Heart right ventricle (tissue), 16 donors: ENCODE measurements at regions of chr1 and their contacts with region 1.

Region 1: GRCh38 chr1:71049951-71050598 is 2.5 kb upstream of the PTGER3 start:
- DNase-seq: peak in 1 of 2 donors; percentile 40
- ATAC-seq: peak in 5 of 8 donors; percentile 40 to 66 (median 61)
- H3K4me3 ChIP-seq: no peak overlapping the region
- H3K27ac ChIP-seq: no peak overlapping the region
- H3K4me1 ChIP-seq: peaks cover 2 to 19% (median 14%) of the 10 kb centered on the region in 9 donors
- H3K27me3 ChIP-seq: peaks cover 16 to 56% (median 51%) of the 10 kb centered on the region in 7 donors
- CTCF ChIP-seq: peak; percentile 51 to 84 (median 78)

Region 2: GRCh38 chr1:70101774-70102173 is 948.3 kb before region 1 on chr1:
- intact Hi-C with region 1: no loop called
- DNase-seq: no peak
- ATAC-seq: no peak
- H3K4me3 ChIP-seq: no peak overlapping the region
- H3K27ac ChIP-seq: no peak overlapping the region
- H3K4me1 ChIP-seq: no peaks in the 10 kb centered on the region
- H3K27me3 ChIP-seq: no peaks in the 10 kb centered on the region
- CTCF ChIP-seq: no peak

Region 3: DNA sequence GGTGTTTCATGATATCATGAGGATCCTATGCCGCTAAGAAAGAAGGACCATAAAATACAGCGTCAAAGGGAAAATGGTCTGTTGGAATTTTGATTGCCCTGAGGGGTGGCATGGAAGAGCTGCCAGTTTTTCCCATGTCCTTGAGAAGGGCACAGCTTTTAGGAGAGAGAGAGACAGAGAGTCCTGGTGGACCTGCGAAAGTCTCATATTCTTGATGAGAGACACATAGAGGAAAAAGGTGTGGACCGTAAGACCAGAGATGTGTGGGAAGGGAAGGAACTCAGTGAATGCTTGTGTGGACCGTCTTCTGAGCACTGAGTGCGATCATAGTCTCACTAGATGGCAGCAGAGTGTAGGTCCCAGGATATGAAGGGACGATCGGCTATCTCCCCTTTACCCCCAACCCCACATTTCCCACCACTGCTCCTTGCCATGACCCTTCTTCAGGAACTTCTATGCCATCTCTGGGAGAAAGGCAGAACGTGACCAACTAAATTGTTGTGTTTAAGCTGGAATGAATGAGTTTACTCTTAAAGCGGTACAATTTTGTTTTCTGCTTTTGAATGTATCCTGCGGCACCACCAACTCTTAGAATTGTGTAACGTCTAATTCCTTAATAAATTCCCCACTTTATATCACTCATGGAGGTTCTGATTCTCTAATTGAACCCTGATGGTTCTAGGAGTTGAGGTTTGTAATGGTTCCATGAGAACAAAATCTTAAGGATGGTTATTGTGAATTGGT is 521.3 kb before region 1 on chr1:
- intact Hi-C with region 1: loop called in 9 of 10 experiments (anchors 1 to 5 kb)
- DNase-seq: peak in 1 of 2 donors; percentile 21
- ATAC-seq: peak in 3 of 8 donors; percentile 60 to 81 (median 66)
- H3K4me3 ChIP-seq: no peak overlapping the region
- H3K27ac ChIP-seq: no peak overlapping the region
- H3K4me1 ChIP-seq: no peaks in the 10 kb centered on the region
- H3K27me3 ChIP-seq: peaks cover 0 to 9% (median 7%) of the 10 kb centered on the region in 7 donors
- CTCF ChIP-seq: peak in 8 of 9 donors; percentile 37 to 75 (median 60)

Region 4: DNA sequence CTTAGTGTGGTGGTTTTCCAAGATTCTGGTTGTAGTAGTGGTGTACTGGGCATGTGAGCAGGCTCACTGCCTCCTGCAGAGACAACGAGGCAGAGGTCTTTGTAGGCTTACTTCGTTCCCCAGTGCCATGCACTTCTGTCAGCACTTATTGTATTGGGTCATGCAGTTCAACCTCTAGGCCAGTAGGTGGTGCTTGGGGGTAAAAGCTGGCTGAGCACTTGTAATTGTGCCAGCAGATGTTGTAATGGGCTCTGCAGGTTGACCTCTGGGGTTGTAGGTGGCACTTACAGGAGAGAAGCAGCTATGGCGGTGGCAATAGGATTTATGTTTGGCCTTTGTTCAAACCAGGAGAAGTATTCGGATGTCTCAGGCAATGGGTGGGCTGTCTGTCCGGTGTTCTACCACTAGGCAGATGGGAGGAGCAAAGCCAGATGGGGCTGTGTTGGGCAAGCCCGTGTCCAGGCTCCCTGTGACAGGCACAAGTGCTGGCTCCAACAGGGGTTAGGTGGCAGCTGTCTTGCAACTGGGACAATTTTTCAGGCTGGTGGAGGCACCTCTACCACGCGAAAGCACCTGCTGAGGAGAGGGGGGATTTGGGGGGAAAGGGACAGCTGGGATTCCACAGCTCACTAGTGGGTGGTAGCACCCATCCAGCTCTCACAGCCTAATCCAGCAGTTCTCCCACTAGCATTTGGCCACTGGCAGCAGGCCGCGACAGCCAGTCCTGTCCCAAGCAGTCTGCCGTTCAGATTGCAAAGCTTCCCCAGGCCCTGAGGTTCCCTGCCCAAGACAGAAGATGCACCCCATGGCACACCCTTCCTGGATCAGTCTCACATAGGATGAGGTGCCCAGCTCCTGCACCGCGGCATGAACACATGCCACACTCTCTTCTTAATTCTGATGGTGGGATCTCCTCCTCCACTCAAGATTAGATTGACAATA is 364.5 kb before region 1 on chr1:
- intact Hi-C with region 1: loop called (anchors 1 to 5 kb)
- DNase-seq: peak in 1 of 2 donors; percentile 54
- ATAC-seq: peak; percentile 65 to 90 (median 80)
- H3K4me3 ChIP-seq: no peak overlapping the region
- H3K27ac ChIP-seq: no peak overlapping the region
- H3K4me1 ChIP-seq: no peaks in the 10 kb centered on the region
- H3K27me3 ChIP-seq: peaks cover 0 to 8% (median 0%) of the 10 kb centered on the region in 7 donors
- CTCF ChIP-seq: peak; percentile 67 to 86 (median 79)

Region 5: DNA sequence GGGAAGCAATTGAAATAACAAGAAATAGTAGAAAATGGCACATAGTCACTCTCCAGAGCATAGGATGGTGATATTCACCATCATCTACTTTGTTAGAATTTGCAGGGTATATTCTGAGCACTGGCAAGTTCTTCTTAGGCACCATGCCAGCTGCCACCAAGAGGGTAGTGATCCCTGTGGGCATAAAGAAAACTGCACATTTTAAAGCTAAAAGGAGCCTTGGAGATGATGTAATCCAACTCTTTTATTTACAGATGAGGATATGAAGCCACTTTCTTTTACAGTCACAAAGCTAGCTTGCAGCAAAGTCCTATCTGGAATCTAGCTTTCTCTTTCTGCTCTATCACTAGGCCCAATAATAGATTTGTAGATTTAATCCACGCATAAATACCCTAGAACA is 71.5 kb before region 1 on chr1:
- intact Hi-C with region 1: no loop called
- DNase-seq: no peak
- ATAC-seq: peak in 1 of 8 donors; percentile 21
- H3K4me3 ChIP-seq: no peak overlapping the region
- H3K27ac ChIP-seq: no peak overlapping the region
- H3K4me1 ChIP-seq: peaks cover 0 to 13% (median 0%) of the 10 kb centered on the region in 9 donors
- H3K27me3 ChIP-seq: peaks cover 0 to 5% (median 0%) of the 10 kb centered on the region in 7 donors
- CTCF ChIP-seq: no peak